ENCODE measurements at regions of chr1 and their contacts with region 1.

Region 1: GRCh38 chr1:156383023-156383422 is 14.0 kb downstream of the RHBG start:
- DNase-seq: peak; percentile 74
- H3K4me3 Mint-ChIP-seq: no peak overlapping the region
- H3K27ac Mint-ChIP-seq: no peak overlapping the region
- H3K4me1 Mint-ChIP-seq: peaks cover 4% of the 10 kb centered on the region
- H3K27me3 Mint-ChIP-seq: peaks cover 10% of the 10 kb centered on the region

Region 2: DNA sequence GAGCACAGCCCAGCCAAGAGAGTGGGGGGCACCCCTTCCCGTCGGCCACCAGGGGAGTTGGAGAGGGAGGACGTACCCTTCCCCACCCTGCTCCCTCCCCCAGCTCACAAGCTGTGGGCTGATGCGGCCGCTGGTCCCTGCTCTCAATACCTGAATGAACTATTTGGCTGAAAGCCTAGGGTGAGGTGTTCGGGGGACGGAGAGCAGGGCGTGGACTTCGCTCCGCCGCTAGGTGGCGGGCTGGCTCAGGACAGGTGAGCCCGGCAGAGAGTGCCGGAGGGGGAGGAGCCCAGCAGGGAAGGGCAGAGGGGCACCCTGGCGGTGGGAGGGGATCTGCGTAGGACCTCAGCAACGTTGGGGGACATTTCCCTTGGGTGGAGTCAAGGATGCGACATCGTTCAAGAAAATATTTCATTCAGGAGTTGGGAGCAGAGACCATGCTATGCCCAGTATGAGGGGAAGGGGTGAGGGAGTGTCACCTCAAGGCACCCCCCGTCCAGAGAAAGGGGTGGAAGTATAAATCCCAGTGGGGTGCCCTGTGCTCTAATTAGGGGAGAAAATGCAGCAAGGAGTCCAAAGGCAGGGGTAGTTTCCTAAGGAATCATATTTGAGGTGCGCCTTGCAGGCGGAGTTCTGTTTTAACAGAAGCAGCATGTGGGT is 26.0 kb before region 1 on chr1:
- CTCF ChIA-PET with region 1: interaction called, 36 read pairs
- POLR2A ChIA-PET with region 1: no interaction called
- intact Hi-C with region 1: no loop called
- DNase-seq: peak; percentile 70
- H3K4me3 Mint-ChIP-seq: no peak overlapping the region
- H3K27ac Mint-ChIP-seq: no peak overlapping the region
- H3K4me1 Mint-ChIP-seq: peaks cover 14% of the 10 kb centered on the region
- H3K27me3 Mint-ChIP-seq: peaks cover 11% of the 10 kb centered on the region

Region 3: GRCh38 chr1:156401681-156402081 is 18.7 kb after region 1 on chr1:
- CTCF ChIA-PET with region 1: interaction called, 16 read pairs
- POLR2A ChIA-PET with region 1: no interaction called
- intact Hi-C with region 1: no loop called
- DNase-seq: no peak
- H3K4me3 Mint-ChIP-seq: no peak overlapping the region
- H3K27ac Mint-ChIP-seq: no peak overlapping the region
- H3K4me1 Mint-ChIP-seq: no peaks in the 10 kb centered on the region
- H3K27me3 Mint-ChIP-seq: peaks cover 5% of the 10 kb centered on the region

Region 4: DNA sequence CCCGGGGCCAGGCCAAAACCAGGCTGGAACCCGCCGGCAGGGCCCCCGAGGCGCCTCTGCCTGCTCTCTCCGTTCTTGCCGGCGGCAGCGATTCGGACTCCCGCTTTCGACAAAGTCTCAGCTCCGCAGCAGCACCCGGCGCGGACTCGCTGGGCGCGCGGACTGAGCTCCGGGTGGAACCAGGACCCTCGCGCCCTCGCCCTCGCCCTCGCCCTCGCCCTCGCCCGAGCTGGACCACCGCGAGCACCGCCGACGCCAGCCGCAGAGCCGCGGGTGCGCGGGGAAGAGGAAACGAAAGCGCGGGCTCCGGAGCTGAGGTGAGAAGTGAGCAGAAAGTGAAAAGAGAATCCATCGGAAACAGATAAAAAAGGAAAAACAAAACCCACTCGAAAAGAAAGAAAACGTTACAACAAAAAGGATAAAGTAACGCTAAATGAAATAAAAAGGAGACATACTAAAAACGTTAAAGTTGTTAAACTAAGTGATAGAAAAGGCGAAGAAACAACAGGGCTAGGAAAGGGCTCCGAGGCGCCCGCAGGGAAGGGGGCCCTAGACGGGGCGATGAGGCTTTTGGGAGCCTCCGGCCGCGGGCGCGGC is 52.6 kb after region 1 on chr1:
- CTCF ChIA-PET with region 1: interaction called, 146 read pairs
- POLR2A ChIA-PET with region 1: interaction called, 3 read pairs
- intact Hi-C with region 1: no loop called
- DNase-seq: peak; percentile 32
- H3K4me3 Mint-ChIP-seq: peak overlapping the region; percentile 46
- H3K27ac Mint-ChIP-seq: no peak overlapping the region
- H3K4me1 Mint-ChIP-seq: peaks cover 38% of the 10 kb centered on the region
- H3K27me3 Mint-ChIP-seq: peaks cover 79% of the 10 kb centered on the region

Region 5: GRCh38 chr1:156456622-156457465 is 73.8 kb after region 1 on chr1:
- CTCF ChIA-PET with region 1: interaction called, 21 read pairs
- POLR2A ChIA-PET with region 1: no interaction called
- intact Hi-C with region 1: no loop called
- DNase-seq: peak; percentile 99
- H3K4me3 Mint-ChIP-seq: peak overlapping the region; percentile 86
- H3K27ac Mint-ChIP-seq: peak overlapping the region; percentile 99
- H3K4me1 Mint-ChIP-seq: peaks cover 29% of the 10 kb centered on the region
- H3K27me3 Mint-ChIP-seq: no peaks in the 10 kb centered on the region

Region 6: DNA sequence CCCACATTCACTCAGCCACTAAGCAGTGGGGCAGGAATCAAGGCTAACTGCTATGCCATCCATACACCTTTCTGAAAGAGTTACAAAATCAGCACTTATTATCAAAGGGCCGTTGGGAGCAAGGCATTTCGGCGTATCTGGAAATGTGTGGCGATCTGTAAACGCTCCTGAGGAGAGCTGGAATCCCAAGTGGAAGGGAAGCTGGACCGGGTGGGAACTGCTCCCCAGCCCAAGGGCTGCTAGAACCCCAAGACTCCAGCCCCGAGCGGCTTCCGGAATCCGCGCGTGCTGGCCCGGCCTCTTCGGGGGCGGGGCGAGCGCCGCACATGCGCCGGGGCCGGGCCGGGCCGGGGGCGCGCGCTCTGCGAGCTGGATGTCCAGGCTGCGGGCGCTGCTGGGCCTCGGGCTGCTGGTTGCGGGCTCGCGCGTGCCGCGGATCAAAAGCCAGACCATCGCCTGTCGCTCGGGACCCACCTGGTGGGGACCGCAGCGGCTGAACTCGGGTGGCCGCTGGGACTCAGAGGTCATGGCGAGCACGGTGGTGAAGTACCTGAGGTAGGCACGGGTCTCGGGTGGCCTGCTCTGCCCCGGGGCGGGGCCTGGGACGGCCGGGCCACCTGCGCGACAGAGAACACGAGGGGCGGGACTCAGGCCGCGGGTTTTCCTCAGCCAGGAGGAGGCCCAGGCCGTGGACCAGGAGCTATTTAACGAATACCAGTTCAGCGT is 208.6 kb after region 1 on chr1 and contains the start of gene NAXE:
- CTCF ChIA-PET with region 1: interaction called, 11 read pairs
- POLR2A ChIA-PET with region 1: no interaction called
- intact Hi-C with region 1: no loop called
- DNase-seq: peak; percentile 77
- H3K4me3 Mint-ChIP-seq: peak within 1 kb of the TSS; percentile 79
- H3K27ac Mint-ChIP-seq: peak within 1 kb of the TSS; percentile 85
- H3K4me1 Mint-ChIP-seq: peaks cover 19% of the 10 kb centered on the region
- H3K27me3 Mint-ChIP-seq: no peaks in the 10 kb centered on the region
- total RNA-seq, gene NAXE: 73.6 to 76.7 TPM

Region 7: DNA sequence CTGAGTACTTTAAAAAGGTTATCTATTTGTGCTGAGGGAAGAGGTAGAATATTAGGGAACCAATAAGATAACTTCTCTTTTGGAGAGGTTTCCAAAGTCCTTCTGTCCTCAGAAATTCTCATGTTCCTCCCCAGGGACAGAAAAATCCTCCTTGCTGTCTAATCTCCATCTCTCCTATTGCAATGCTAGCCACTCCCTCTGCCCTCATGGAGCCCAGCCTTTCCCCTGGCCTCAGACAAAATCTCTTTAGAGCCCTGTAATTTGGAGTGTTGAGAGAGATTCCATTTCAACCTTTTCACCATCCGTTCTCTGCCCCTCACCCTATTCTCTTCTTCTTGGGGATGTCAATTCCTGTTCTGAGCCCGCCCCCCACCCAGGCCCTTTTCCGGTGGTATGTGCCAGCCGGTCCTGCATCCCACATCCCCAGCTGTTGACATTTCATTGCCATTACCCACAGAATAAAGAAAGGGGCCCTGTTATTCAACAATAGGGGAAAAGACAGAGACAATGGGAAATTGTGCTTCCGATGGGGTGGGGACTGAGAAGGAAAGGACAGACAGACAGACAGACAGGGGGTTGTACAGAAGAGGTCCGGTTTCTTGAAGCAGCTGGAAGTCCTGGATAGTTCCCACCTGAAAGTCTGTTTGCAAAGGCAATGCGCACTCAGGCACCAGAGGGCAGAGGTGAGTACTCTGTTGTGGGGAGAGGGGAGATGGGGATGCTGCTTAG is 236.0 kb after region 1 on chr1 and contains the start of gene HAPLN2:
- CTCF ChIA-PET with region 1: interaction called, 11 read pairs
- POLR2A ChIA-PET with region 1: no interaction called
- intact Hi-C with region 1: no loop called
- DNase-seq: peak; percentile 29
- H3K4me3 Mint-ChIP-seq: no peak within 1 kb of the TSS
- H3K27ac Mint-ChIP-seq: no peak within 1 kb of the TSS
- H3K4me1 Mint-ChIP-seq: peaks cover 1% of the 10 kb centered on the region
- H3K27me3 Mint-ChIP-seq: peaks cover 42% of the 10 kb centered on the region
- total RNA-seq, gene HAPLN2: 0.21 to 0.34 TPM

Measured in activated CD4-positive, alpha-beta memory T cell treated with anti-CD3 and anti-CD28 coated beads for 36 hours (primary cell).